Gastrocnemius medialis (tissue), 4 donors: ENCODE measurements at regions of chr9 and their contacts with region 1.

Region 1: GRCh38 chr9:6008169-6008979 is 7.0 kb downstream of the RANBP6 start:
- DNase-seq: peak; percentile 97 to 98
- ATAC-seq: peak; percentile 92 to 94
- H3K4me3 ChIP-seq: peak overlapping the region; percentile 81 to 96 (median 94)
- H3K27ac ChIP-seq: peak overlapping the region; percentile 96 to 99 (median 99)
- H3K4me1 ChIP-seq: peaks cover 56 to 71% of the 10 kb centered on the region in 2 donors
- H3K27me3 ChIP-seq: no peaks in the 10 kb centered on the region
- CTCF ChIP-seq: no peak
- POLR2A ChIP-seq: peak; percentile 62 to 69

Region 2: DNA sequence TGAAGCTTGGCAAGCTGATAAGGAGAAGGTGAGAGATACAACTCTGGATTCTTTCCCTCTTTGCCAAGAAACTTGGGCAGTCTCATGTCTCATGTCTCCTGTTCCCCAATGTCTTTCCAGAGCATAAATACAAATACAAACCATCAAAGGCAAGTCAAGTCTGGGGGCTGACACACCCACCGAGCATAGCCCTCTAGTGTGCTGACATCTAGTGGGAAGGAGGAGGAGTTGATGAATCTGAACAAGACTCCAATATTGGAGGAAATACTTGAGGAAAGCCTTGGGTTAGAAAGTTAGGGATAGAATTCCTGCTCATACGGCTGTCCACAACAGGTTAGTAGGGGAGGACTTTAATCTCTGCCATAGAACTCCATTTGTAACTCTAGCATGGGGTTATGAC is 109.1 kb before region 1 on chr9:
- in situ Hi-C with region 1: no loop called
- intact Hi-C with region 1: no loop called
- DNase-seq: no peak
- ATAC-seq: no peak
- H3K4me3 ChIP-seq: no peak overlapping the region
- H3K27ac ChIP-seq: no peak overlapping the region
- H3K4me1 ChIP-seq: peaks cover 0 to 4% of the 10 kb centered on the region in 2 donors
- H3K27me3 ChIP-seq: no peaks in the 10 kb centered on the region
- CTCF ChIP-seq: no peak
- POLR2A ChIP-seq: no peak

Region 3: DNA sequence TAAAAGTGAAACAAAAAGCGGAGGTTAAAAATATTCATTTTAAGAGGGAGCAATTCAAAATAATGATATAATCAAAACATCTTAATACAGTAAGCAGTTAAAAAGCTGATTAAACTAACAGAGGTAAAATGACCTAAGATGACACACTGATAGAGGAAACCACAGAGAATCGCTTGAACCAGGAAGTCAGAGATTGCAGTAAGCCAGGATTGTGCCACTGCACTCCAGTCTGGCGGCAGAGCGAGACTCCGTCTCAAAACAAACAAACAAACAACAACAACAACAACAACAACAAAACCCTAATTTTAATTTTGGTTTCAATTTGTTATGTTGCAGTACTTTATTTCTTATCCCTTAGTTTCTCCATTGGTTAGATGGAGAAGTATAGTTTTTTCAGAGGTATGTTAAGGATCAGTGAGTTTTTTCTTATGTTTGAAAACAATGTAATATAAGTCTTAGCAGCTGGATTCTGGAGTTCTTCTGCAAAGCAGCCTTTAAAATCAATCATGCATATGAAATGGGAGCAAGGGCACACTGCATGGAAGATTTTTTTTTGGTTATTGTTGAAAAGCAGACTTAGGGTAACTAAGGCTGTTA is 59.2 kb before region 1 on chr9:
- in situ Hi-C with region 1: no loop called
- intact Hi-C with region 1: loop called (anchors 10 kb)
- DNase-seq: no peak
- ATAC-seq: peak; percentile 60 to 68
- H3K4me3 ChIP-seq: peak overlapping the region; percentile 7 to 40 (median 22)
- H3K27ac ChIP-seq: peak overlapping the region in 3 of 4 donors; percentile 13 to 38 (median 24)
- H3K4me1 ChIP-seq: peaks cover 27 to 29% of the 10 kb centered on the region in 2 donors
- H3K27me3 ChIP-seq: no peaks in the 10 kb centered on the region
- CTCF ChIP-seq: no peak
- POLR2A ChIP-seq: no peak

Region 4: GRCh38 chr9:6080154-6080716 is 71.9 kb after region 1 on chr9:
- in situ Hi-C with region 1: no loop called
- intact Hi-C with region 1: loop called (anchors 1 kb)
- DNase-seq: peak; percentile 62 to 85
- ATAC-seq: peak; percentile 90 to 95
- H3K4me3 ChIP-seq: peak overlapping the region; percentile 49 to 61 (median 54)
- H3K27ac ChIP-seq: peak overlapping the region; percentile 69 to 74 (median 71)
- H3K4me1 ChIP-seq: peaks cover 0 to 6% of the 10 kb centered on the region in 2 donors
- H3K27me3 ChIP-seq: no peaks in the 10 kb centered on the region
- CTCF ChIP-seq: peak in 2 of 5 experiments; percentile 9 to 17
- POLR2A ChIP-seq: no peak

Region 5: DNA sequence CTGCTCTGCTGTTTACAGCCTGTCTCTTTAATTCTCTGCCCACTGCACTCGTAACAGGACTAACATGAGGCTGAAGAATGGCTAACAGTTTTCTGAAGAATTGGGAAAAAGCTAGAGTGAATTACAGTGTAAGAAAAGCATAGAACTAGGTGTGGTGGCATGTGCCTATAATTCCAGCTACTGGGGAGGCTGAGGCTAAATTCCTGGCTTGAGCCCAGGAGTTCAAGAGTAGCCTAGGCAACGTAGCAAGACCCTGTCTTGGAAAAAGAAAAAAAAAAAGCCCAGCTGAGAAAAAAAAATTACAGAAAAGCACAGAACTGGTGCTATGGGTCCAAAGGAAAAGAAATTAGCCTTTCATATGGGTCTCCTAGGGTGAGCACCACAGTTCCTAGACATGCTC is 390.7 kb after region 1 on chr9:
- in situ Hi-C with region 1: no loop called
- intact Hi-C with region 1: no loop called
- DNase-seq: no peak
- ATAC-seq: no peak
- H3K4me3 ChIP-seq: no peak overlapping the region
- H3K27ac ChIP-seq: no peak overlapping the region
- H3K4me1 ChIP-seq: no peaks in the 10 kb centered on the region
- H3K27me3 ChIP-seq: no peaks in the 10 kb centered on the region
- CTCF ChIP-seq: no peak
- POLR2A ChIP-seq: no peak

Region 6: DNA sequence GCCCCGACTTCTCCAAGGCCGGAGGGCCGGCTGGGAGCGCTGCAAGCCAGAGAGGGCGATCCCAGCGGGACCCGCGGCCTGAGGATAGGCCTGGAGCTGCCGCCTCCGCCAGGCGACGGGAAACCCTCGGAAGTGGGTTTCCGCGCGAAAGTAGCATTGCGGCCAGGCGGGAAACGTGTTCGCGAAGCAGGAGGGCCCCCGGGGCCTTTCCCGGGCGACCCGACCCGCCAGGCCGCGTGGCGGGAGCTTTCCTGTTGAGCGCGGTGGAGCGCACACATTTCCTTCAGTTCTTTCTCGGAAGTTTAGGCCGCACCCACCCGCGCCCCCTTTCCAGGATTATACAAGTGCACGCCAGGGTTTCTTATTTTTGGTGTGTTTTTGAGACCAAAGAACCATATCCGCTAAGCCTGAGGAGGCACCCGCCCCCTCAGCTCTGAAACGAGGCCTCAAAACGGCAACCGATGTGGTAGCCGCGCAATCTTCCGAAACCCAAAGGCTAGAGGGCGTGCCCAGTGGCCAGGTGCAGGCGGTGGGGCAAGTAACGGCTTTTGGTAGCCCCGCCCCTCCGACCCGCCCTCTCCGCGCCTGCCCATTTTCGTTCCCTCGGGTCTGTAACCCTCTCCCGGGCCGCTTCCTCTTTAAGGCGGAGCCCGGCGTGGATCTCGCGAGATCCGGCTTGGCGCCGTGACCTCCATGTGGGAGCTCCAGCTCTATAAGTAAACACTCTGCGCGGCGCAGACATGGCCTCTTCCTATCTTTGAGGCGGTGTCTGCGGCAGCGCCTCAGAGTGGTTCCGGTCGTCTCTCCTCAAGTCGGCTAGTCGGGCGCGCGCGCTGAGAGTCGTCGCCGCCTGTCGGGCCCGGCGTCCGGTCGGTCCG is 404.4 kb after region 1 on chr9 and contains the start of gene UHRF2:
- in situ Hi-C with region 1: no loop called
- intact Hi-C with region 1: loop called (anchors 1 kb)
- DNase-seq: peak; percentile 96 to 98
- ATAC-seq: peak; percentile 95 to 96
- H3K4me3 ChIP-seq: peak within 1 kb of the TSS; percentile 80 to 86 (median 84)
- H3K27ac ChIP-seq: peak within 1 kb of the TSS; percentile 80 to 86 (median 83)
- H3K4me1 ChIP-seq: peaks cover 18 to 21% of the 10 kb centered on the region in 2 donors
- H3K27me3 ChIP-seq: no peaks in the 10 kb centered on the region
- CTCF ChIP-seq: peak in 1 of 5 experiments; percentile 15
- POLR2A ChIP-seq: peak; percentile 62 to 89
- total RNA-seq, gene UHRF2: 16.7 to 29.0 (median 18.8) TPM